ENCODE measurements at regions of chrX and their contacts with region 1.

Region 1: DNA sequence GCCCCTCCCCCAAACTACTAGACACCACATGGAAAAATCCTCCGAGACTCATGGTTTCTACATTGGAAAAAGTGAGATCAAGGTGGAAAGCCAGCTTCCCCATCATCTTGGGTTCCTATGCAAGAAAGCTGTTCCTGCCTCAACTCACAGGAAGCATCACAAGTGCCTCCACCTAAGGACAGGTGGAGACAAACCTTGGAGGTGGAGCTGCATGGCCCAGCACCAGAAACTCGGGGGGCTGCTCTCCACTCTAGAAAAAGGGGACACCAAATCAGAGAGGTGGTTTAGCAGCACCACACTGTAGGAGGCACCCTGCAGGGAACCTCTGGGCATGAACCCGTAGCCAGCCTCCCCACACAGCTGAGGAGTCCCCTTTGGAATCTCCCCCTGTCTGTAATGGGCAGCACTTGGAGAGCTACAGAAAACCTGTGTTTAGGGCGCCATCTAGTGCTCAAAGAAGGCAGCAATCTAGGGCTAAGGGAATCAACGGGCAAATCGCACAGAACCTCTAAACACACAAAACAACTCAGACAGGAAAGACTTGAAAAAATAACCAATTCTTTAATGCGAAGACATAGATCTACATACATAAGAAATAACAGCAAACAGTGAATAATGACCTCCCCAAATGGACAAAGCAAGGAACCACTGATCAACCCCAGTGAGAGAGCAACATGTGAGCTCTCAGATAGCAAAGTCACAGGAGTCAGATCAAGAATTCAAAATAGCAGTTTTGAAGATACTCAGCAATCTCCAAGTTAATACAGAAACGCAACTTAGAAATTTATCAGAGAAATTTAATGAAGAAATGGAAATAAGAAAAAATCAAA is 37.0 kb upstream of the ZBTB33 start:
- DNase-seq: peak; percentile 15
- H3K4me3 ChIP-seq: no peak overlapping the region
- H3K27ac ChIP-seq: no peak overlapping the region
- H3K4me1 ChIP-seq: no peaks in the 10 kb centered on the region
- H3K27me3 ChIP-seq: no peaks in the 10 kb centered on the region
- CTCF ChIP-seq: peak in 3 of 4 experiments; percentile 37 to 50 (median 41)
- POLR2A ChIP-seq: no peak

Region 2: GRCh38 chrX:120090208-120090607 is 123.4 kb before region 1 on chrX:
- intact Hi-C with region 1: loop called (anchors 10 kb)
- DNase-seq: no peak
- H3K4me3 ChIP-seq: no peak overlapping the region
- H3K27ac ChIP-seq: no peak overlapping the region
- H3K4me1 ChIP-seq: no peaks in the 10 kb centered on the region
- H3K27me3 ChIP-seq: no peaks in the 10 kb centered on the region
- CTCF ChIP-seq: no peak
- POLR2A ChIP-seq: no peak

Region 3: DNA sequence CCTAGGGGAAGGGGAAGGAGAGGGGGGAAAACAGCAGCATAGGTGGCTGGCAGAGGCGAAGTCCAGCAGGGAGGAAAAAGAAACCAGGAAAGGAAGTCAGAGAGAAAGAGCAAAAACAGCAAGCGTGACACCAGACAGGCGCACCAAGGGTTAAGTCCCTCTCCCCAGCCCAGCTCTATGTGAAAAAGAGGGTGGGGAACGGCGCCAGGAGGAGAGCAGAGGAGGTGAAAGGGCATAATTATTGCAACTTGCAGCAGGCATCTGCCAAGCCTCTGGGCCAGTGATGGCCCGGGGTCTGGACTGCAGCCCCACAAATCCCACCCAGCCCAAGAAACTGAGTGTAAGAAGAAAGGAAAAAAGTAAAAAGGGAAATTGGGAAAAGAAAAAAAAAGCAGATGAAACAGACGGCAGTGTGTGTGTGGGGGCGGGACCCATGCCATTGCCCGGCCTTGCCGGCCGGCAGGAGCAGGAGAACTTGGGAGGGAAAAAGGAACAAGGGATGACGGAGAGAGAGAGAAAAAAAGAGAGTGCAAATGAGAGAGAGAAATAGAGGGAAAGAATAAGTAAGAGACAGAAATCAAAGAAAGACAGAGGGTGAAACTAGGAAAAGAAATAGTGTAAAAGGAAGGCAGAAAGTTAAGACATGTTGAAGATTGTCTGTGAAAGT is 69.3 kb before region 1 on chrX:
- intact Hi-C with region 1: loop called (anchors 10 kb)
- DNase-seq: no peak
- H3K4me3 ChIP-seq: no peak overlapping the region
- H3K27ac ChIP-seq: no peak overlapping the region
- H3K4me1 ChIP-seq: no peaks in the 10 kb centered on the region
- H3K27me3 ChIP-seq: no peaks in the 10 kb centered on the region
- CTCF ChIP-seq: no peak
- POLR2A ChIP-seq: no peak

Measured in prostate gland (tissue), 2 donors.